ENCODE measurements at regions of chrX and their contacts with region 1.

Region 1: GRCh38 chrX:19887911-19888879 is 795 bp upstream of the SH3KBP1 start:
- DNase-seq: peak; percentile 14 to 64 (median 54)
- ATAC-seq: peak; percentile 61
- H3K4me3 ChIP-seq: peak overlapping the region; percentile 55
- H3K4me3 Mint-ChIP-seq: peak overlapping the region; percentile 78 to 86 (median 82)
- H3K27ac ChIP-seq: peak overlapping the region; percentile 68
- H3K27ac Mint-ChIP-seq: peak overlapping the region; percentile 74 to 95 (median 89)
- H3K4me1 ChIP-seq: peaks cover 5 to 7% of the 10 kb centered on the region in 2 donors
- H3K4me1 Mint-ChIP-seq: peaks cover 17 to 40% (median 36%) of the 10 kb centered on the region in 7 donors
- H3K27me3 ChIP-seq: no peaks in the 10 kb centered on the region
- H3K27me3 Mint-ChIP-seq: no peaks in the 10 kb centered on the region

Region 2: GRCh38 chrX:19544693-19545305 is 343.4 kb before region 1 on chrX:
- CTCF ChIA-PET with region 1: no interaction called
- POLR2A ChIA-PET with region 1: no interaction called
- intact Hi-C with region 1: loop called (anchors 1 kb)
- DNase-seq: peak in 8 of 9 donors; percentile 9 to 43 (median 30)
- ATAC-seq: peak; percentile 76
- H3K4me3 ChIP-seq: no peak overlapping the region
- H3K4me3 Mint-ChIP-seq: no peak overlapping the region
- H3K27ac ChIP-seq: no peak overlapping the region
- H3K27ac Mint-ChIP-seq: peak overlapping the region in 5 of 9 donors; percentile 40 to 83 (median 72)
- H3K4me1 ChIP-seq: no peaks in the 10 kb centered on the region
- H3K4me1 Mint-ChIP-seq: peaks cover 0 to 12% (median 3%) of the 10 kb centered on the region in 7 donors
- H3K27me3 ChIP-seq: no peaks in the 10 kb centered on the region
- H3K27me3 Mint-ChIP-seq: no peaks in the 10 kb centered on the region

Region 3: DNA sequence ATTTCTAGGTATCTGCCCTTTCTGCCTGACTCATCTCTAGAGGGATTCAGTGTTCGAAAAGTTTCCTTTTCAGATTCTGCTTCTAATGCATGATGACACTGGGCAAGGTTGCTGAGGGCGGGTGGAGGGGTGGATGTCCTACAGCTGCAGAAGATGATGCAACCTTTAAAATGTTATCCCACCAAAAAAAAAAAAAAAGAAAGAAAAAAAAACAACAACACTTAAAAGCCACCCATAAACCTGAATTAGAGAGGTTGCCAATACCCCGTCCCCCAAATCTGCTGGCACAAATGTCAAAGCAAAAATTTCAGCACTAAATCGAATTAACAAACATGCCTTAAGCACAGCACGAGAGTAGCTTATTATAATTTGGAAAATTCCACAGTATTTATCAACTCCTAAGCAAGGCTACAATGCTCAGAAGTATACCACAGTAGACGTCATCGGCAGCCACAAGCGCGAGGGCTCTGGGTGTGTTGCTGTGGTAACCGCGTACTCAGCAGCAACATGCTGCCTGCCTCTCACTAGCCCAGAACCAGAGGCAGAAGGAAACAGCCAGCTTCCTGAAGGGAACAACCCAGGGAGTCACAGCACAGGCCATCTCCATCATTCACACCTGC is 205.4 kb before region 1 on chrX:
- CTCF ChIA-PET with region 1: no interaction called
- POLR2A ChIA-PET with region 1: no interaction called
- intact Hi-C with region 1: loop called (anchors 1 to 2 kb)
- DNase-seq: peak; percentile 24 to 88 (median 81)
- ATAC-seq: peak; percentile 97
- H3K4me3 ChIP-seq: no peak overlapping the region
- H3K4me3 Mint-ChIP-seq: peak overlapping the region in 9 of 10 donors; percentile 4 to 85 (median 67)
- H3K27ac ChIP-seq: peak overlapping the region; percentile 81
- H3K27ac Mint-ChIP-seq: peak overlapping the region; percentile 85 to 100 (median 98)
- H3K4me1 ChIP-seq: peaks cover 30 to 37% of the 10 kb centered on the region in 2 donors
- H3K4me1 Mint-ChIP-seq: peaks cover 43 to 88% (median 82%) of the 10 kb centered on the region in 7 donors
- H3K27me3 ChIP-seq: no peaks in the 10 kb centered on the region
- H3K27me3 Mint-ChIP-seq: no peaks in the 10 kb centered on the region

Region 4: GRCh38 chrX:19799319-19800182 is 88.6 kb before region 1 on chrX:
- CTCF ChIA-PET with region 1: no interaction called
- POLR2A ChIA-PET with region 1: interaction called, 6 read pairs
- intact Hi-C with region 1: loop called (anchors 1 to 2 kb)
- DNase-seq: peak in 7 of 9 donors; percentile 55 to 79 (median 72)
- ATAC-seq: peak; percentile 82
- H3K4me3 ChIP-seq: peak overlapping the region; percentile 86
- H3K4me3 Mint-ChIP-seq: peak overlapping the region; percentile 89 to 97 (median 94)
- H3K27ac ChIP-seq: peak overlapping the region; percentile 74
- H3K27ac Mint-ChIP-seq: peak overlapping the region; percentile 92 to 97 (median 95)
- H3K4me1 ChIP-seq: peaks cover 53 to 58% of the 10 kb centered on the region in 2 donors
- H3K4me1 Mint-ChIP-seq: peaks cover 15 to 74% (median 64%) of the 10 kb centered on the region in 7 donors
- H3K27me3 ChIP-seq: no peaks in the 10 kb centered on the region
- H3K27me3 Mint-ChIP-seq: no peaks in the 10 kb centered on the region

Region 5: DNA sequence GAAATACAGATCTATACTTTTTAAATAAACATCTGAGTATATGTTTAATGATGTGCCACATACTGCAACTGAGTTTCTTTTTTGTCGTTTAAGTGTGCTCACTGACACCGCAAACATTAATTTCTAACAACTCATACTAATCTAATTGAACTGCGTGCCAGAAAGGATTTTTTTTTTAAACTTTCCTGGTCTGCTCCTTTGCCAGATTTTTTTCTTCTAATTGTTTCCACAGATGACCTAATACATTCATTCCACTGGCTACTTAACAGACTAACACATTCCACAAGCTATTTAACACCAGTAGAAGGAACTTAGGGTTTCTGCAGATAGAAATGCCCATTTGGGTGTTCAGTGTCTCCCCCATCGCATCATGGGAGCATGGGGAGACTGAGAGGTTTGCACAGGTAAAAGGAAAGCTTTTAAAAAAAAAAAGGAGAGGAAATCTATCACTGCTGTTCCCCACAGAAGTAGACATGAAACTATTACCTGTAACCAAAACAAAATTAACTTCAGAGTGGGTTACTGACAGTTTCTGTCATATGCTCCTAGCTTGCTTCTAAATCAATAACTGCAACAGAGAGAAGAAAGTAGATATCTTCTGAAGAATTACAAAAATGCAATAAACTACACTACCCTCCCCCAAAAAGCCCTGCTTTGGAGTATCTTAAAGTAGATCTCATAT is 32.4 kb before region 1 on chrX:
- CTCF ChIA-PET with region 1: interaction called, 3 read pairs
- POLR2A ChIA-PET with region 1: interaction called, 3 read pairs
- intact Hi-C with region 1: loop called in 1 of 2 experiments (anchors 2 kb)
- DNase-seq: no peak
- ATAC-seq: no peak
- H3K4me3 ChIP-seq: peak overlapping the region; percentile 13
- H3K4me3 Mint-ChIP-seq: peak overlapping the region in 9 of 10 donors; percentile 44 to 78 (median 74)
- H3K27ac ChIP-seq: peak overlapping the region; percentile 31
- H3K27ac Mint-ChIP-seq: peak overlapping the region; percentile 53 to 95 (median 85)
- H3K4me1 ChIP-seq: peaks cover 11 to 17% of the 10 kb centered on the region in 2 donors
- H3K4me1 Mint-ChIP-seq: peaks cover 24 to 45% (median 37%) of the 10 kb centered on the region in 7 donors
- H3K27me3 ChIP-seq: no peaks in the 10 kb centered on the region
- H3K27me3 Mint-ChIP-seq: no peaks in the 10 kb centered on the region

Measured in naive thymus-derived CD4-positive, alpha-beta T cell (primary cell).